Left cardiac atrium (tissue), 4 donors: ENCODE measurements at regions of chr2 and their contacts with region 1.

Region 1: GRCh38 chr2:201231781-201232466 is 28.4 kb upstream of the CASP8 start:
- DNase-seq: peak; percentile 89
- ATAC-seq: peak; percentile 78 to 86

Region 2: DNA sequence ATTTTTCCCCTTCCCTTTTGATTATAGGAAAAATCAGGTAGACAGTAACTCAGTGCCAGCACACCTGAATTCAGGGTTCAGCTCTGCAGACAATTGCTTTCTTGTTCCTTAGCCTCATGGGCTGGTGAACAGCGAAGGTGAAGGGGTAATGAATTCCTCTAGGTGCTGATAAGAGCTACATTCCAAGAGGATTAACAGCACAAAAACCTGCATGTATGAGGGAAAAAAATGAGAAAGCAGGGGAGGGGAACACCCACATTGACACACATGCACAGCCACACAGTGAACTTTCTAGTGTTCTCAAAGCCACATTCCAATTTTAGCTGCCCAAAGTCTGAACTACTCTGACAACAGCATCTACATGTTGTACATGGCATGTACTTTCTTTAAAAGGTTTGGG is 879.3 kb before region 1 on chr2:
- intact Hi-C with region 1: no loop called
- DNase-seq: no peak
- ATAC-seq: peak in 1 of 2 donors; percentile 57

Region 3: DNA sequence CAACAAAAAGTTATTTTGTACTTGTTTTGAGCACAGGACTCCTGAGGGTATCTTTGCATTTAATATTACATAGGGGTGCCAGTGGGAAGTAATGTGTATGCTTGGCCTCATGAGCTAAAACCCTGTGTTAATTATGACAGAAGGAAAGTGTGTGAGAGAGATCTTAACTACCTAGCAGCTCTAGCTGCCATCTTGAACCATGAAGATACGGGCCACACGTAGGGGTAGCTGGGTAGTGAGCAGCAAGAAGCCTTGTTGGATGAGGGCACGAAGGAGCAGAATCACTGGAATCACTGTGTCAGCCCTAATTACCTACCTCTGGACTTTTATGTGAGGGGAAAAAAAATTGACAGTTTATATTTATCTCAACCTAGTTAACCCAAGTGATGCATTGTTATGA is 64.4 kb before region 1 on chr2:
- intact Hi-C with region 1: no loop called
- DNase-seq: no peak
- ATAC-seq: peak in 1 of 2 donors; percentile 6

Region 4: GRCh38 chr2:201182650-201183364 is 49.1 kb before region 1 on chr2 and contains the start of gene CASP10:
- intact Hi-C with region 1: loop called in 1 of 2 experiments (anchors 5 kb)
- DNase-seq: no peak
- ATAC-seq: peak; percentile 75 to 86
- total RNA-seq, gene CASP10: 7.1 to 9.9 TPM

Region 5: GRCh38 chr2:201357241-201357640 is 125.3 kb after region 1 on chr2 and contains the start of gene FLACC1:
- intact Hi-C with region 1: loop called (anchors 5 to 10 kb)
- DNase-seq: peak; percentile 31
- ATAC-seq: peak; percentile 89 to 95
- total RNA-seq, gene FLACC1: 4.9 to 5.7 TPM

Region 6: GRCh38 chr2:201363857-201364560 is 132.1 kb after region 1 on chr2:
- intact Hi-C with region 1: loop called (anchors 5 to 10 kb)
- DNase-seq: no peak
- ATAC-seq: peak; percentile 72 to 78